Naive thymus-derived CD4-positive, alpha-beta T cell (primary cell): ENCODE measurements at regions of chr12 and their contacts with region 1.

Region 1: DNA sequence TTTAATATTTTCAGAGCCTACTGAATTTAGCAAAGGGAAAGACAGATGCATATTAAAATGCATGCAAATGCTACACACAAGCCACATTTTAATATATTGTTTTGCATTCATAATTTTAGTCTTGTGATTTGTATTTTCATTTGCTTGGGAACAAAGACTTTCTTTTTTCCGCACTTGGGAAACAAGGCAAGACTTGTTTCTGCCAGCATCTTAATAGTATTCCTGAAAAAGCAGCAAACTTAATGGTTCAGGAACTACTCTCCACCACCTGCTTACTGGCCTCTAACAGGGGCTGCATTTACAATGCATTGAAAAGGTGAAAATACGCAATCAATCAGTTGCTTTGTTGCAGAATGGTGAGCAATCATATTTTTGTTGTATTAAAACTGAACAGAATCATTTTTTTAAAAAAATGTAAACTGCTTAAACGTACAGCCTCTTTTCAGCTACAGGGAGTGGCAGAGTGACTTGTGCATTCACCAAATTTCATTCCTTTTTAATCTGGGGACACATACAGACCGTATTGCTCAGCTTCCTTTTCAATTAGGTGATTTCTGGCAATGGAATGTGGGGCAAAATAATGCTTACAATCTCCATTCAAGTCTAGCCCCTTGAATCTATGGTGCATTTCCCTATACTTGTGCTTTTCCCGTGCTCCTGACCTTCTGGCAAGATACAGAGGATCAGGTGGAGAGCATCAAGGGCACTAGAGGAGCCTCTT is 144.1 kb upstream of the BTG1 start:
- DNase-seq: no peak
- ATAC-seq: no peak
- H3K4me3 ChIP-seq: no peak overlapping the region
- H3K4me3 Mint-ChIP-seq: no peak overlapping the region
- H3K27ac ChIP-seq: no peak overlapping the region
- H3K27ac Mint-ChIP-seq: peak overlapping the region in 1 of 9 donors; percentile 76
- H3K4me1 ChIP-seq: no peaks in the 10 kb centered on the region
- H3K4me1 Mint-ChIP-seq: peaks cover 3 to 30% (median 16%) of the 10 kb centered on the region in 7 donors
- H3K27me3 ChIP-seq: no peaks in the 10 kb centered on the region
- H3K27me3 Mint-ChIP-seq: no peaks in the 10 kb centered on the region

Region 2: DNA sequence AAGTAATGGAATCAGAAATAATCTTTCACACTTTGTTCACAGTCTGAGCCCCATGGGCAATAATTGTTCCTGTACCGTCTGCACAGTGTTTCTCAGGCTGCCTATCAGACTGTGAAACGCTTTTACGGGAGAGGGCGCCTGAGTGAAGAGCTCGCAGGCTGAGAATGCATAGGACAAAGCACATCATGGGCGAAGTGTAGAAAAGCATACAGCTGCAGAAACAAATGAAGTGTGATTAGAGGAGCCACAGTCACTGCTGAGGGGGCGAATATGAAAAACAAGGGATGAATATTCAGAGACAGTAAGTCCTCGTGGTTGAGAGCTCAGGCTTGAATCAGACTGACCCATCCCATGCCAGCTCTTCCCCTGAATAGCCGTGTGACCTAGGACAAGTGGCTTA is 668.8 kb before region 1 on chr12:
- CTCF ChIA-PET with region 1: no interaction called
- POLR2A ChIA-PET with region 1: no interaction called
- intact Hi-C with region 1: no loop called
- DNase-seq: no peak
- ATAC-seq: no peak
- H3K4me3 ChIP-seq: no peak overlapping the region
- H3K4me3 Mint-ChIP-seq: no peak overlapping the region
- H3K27ac ChIP-seq: no peak overlapping the region
- H3K27ac Mint-ChIP-seq: no peak overlapping the region
- H3K4me1 ChIP-seq: no peaks in the 10 kb centered on the region
- H3K4me1 Mint-ChIP-seq: peaks cover 0 to 14% (median 2%) of the 10 kb centered on the region in 7 donors
- H3K27me3 ChIP-seq: no peaks in the 10 kb centered on the region
- H3K27me3 Mint-ChIP-seq: peaks cover 0 to 9% (median 0%) of the 10 kb centered on the region in 5 donors

Region 3: GRCh38 chr12:92155733-92156132 is 134.1 kb before region 1 on chr12:
- CTCF ChIA-PET with region 1: no interaction called
- POLR2A ChIA-PET with region 1: no interaction called
- intact Hi-C with region 1: no loop called
- DNase-seq: no peak
- ATAC-seq: no peak
- H3K4me3 ChIP-seq: no peak overlapping the region
- H3K4me3 Mint-ChIP-seq: no peak overlapping the region
- H3K27ac ChIP-seq: no peak overlapping the region
- H3K27ac Mint-ChIP-seq: peak overlapping the region in 7 of 9 donors; percentile 32 to 99 (median 90)
- H3K4me1 ChIP-seq: peaks cover 0 to 39% of the 10 kb centered on the region in 2 donors
- H3K4me1 Mint-ChIP-seq: peaks cover 25 to 70% (median 57%) of the 10 kb centered on the region in 7 donors
- H3K27me3 ChIP-seq: no peaks in the 10 kb centered on the region
- H3K27me3 Mint-ChIP-seq: no peaks in the 10 kb centered on the region

Region 4: DNA sequence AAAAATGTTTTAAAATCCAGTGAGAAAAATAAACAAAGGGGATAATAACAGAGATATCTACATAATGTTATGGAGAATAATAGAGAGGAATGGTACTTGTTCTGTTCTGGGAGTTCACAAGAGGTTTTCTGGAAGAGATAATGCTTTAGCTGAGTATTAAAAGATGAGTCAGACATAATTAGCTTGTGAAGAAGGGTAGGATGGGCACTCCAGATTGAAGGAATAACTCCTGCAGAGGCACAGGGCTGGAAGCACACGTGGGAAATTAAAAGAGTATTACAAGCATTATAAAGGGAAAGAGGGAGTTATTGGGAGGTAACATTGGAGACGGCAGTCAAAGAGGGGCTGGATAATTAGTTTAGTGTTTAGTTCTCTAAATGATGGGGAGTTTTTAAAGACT is 19.3 kb before region 1 on chr12:
- CTCF ChIA-PET with region 1: no interaction called
- POLR2A ChIA-PET with region 1: interaction called, 3 read pairs
- intact Hi-C with region 1: loop called in 1 of 2 experiments (anchors 2 kb)
- DNase-seq: no peak
- ATAC-seq: no peak
- H3K4me3 ChIP-seq: no peak overlapping the region
- H3K4me3 Mint-ChIP-seq: no peak overlapping the region
- H3K27ac ChIP-seq: no peak overlapping the region
- H3K27ac Mint-ChIP-seq: peak overlapping the region in 1 of 9 donors; percentile 2
- H3K4me1 ChIP-seq: no peaks in the 10 kb centered on the region
- H3K4me1 Mint-ChIP-seq: peaks cover 5 to 36% (median 21%) of the 10 kb centered on the region in 7 donors
- H3K27me3 ChIP-seq: no peaks in the 10 kb centered on the region
- H3K27me3 Mint-ChIP-seq: no peaks in the 10 kb centered on the region

Region 5: DNA sequence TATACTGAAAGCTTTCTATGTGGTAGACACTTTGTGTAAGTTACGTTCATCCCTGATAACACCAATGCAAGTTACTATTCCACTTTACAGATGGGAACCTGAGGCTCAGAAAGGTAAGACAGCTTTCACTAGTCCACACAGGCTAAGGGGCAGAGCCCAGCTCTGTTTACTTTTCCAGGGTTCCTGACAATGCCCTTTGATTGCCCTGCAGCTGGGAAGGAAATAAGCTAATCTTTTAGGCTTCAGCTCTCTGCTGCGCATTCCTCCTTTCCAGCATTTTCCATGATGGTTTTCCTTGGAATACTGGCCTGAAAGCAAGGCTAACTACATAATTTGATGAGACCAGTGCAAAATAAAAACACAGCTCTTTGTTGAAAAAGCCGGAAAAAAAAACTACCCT is 41.6 kb after region 1 on chr12:
- CTCF ChIA-PET with region 1: no interaction called
- POLR2A ChIA-PET with region 1: no interaction called
- intact Hi-C with region 1: loop called in 1 of 2 experiments (anchors 5 kb)
- DNase-seq: no peak
- ATAC-seq: no peak
- H3K4me3 ChIP-seq: no peak overlapping the region
- H3K4me3 Mint-ChIP-seq: no peak overlapping the region
- H3K27ac ChIP-seq: no peak overlapping the region
- H3K27ac Mint-ChIP-seq: peak overlapping the region in 1 of 9 donors; percentile 25
- H3K4me1 ChIP-seq: peaks cover 6 to 20% of the 10 kb centered on the region in 2 donors
- H3K4me1 Mint-ChIP-seq: peaks cover 17 to 75% (median 58%) of the 10 kb centered on the region in 7 donors
- H3K27me3 ChIP-seq: no peaks in the 10 kb centered on the region
- H3K27me3 Mint-ChIP-seq: no peaks in the 10 kb centered on the region